GM12878 (cell line): ENCODE measurements at regions of chr12 and their contacts with region 1.

Region 1: GRCh38 chr12:49296034-49296835 is 1.3 kb downstream of the PRPH start:
- DNase-seq: no peak
- ATAC-seq: peak; percentile 89
- H3K4me3 ChIP-seq: peak overlapping the region; percentile 40; the same call in 1 of the 2 replicates
- H3K27ac ChIP-seq: no peak overlapping the region
- H3K4me1 ChIP-seq: peaks cover 8% of the 10 kb centered on the region
- H3K27me3 ChIP-seq: peaks cover 19 to 20% of the 10 kb centered on the region in 2 experiments
- CTCF ChIP-seq: peak; percentile 55 to 84 (median 77)
- EP300 ChIP-seq: no peak
- POLR2A ChIP-seq: no peak
- RAD21 ChIP-seq: no peak

Region 2: DNA sequence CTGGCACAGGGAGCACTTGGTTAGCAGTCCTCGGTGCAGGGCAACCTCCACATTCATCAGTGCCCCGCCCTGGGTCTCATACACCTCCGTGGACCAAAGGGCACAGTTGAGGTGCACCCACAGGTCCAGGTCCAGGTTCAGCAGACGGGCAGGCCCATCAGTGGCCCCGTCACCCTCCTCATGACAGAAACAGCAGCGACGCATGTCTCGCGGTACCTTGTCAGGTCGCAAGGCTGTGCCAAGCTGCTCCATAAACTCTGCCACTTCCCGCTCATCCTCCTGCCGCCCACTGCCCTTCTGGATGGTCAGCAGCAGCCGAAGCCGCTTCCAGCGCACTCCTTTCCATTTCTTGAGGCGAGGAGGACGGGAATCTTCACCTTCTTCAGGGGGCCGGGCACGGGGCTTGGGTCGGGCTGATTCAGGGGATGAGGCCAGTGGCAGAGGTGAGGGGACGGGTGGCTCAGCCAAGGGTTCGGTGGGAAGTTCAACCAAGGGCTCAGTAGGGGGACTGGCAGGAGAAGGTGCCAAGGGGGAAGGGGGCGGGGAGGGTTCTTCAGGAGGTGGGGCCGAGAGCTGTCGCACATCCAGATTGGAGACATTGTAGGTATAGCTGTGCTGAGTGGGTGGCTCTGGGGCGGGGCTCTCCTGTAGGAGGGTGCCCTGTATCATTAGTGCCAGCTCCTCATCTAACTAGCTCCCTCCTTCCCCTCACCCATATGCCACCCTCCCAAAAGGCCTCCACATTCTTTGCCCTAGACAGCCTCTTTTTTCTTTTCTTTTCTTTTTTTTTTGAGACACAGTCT is 269.4 kb before region 1 on chr12:
- CTCF ChIA-PET with region 1: no interaction called
- POLR2A ChIA-PET with region 1: no interaction called
- RAD21 ChIA-PET with region 1: no interaction called
- SMC1A ChIA-PET with region 1: no interaction called
- in situ Hi-C with region 1: no loop called
- intact Hi-C with region 1: no loop called
- DNase-seq: no peak
- ATAC-seq: no peak
- H3K4me3 ChIP-seq: no peak overlapping the region
- H3K27ac ChIP-seq: no peak overlapping the region
- H3K4me1 ChIP-seq: no peaks in the 10 kb centered on the region
- H3K27me3 ChIP-seq: no peaks in the 10 kb centered on the region
- CTCF ChIP-seq: no peak
- EP300 ChIP-seq: no peak
- POLR2A ChIP-seq: no peak
- RAD21 ChIP-seq: no peak

Region 3: DNA sequence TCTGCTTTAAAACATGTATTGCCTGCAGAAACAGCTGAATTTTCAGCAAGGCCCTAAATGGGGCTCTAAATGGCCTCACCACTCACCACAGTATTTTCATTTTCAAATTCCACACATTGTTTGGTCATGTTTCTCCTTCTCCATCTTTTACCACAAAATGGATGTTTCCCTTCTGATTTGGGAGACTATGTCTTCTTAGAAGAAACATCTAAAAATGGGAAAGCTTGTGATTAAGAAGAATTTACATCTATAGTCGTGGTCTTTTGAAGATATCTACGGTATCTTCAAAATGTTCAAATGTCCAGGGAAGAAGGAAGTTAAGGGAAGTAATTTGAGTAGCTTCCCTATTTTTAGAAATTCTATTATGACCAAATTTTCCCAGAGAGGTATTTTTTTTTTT is 52.1 kb before region 1 on chr12:
- CTCF ChIA-PET with region 1: no interaction called
- POLR2A ChIA-PET with region 1: no interaction called
- RAD21 ChIA-PET with region 1: no interaction called
- SMC1A ChIA-PET with region 1: no interaction called
- in situ Hi-C with region 1: no loop called
- intact Hi-C with region 1: no loop called
- DNase-seq: no peak
- ATAC-seq: no peak
- H3K4me3 ChIP-seq: no peak overlapping the region
- H3K27ac ChIP-seq: no peak overlapping the region
- H3K4me1 ChIP-seq: no peaks in the 10 kb centered on the region
- H3K27me3 ChIP-seq: no peaks in the 10 kb centered on the region
- CTCF ChIP-seq: no peak
- EP300 ChIP-seq: no peak
- POLR2A ChIP-seq: no peak
- RAD21 ChIP-seq: no peak

Region 4: DNA sequence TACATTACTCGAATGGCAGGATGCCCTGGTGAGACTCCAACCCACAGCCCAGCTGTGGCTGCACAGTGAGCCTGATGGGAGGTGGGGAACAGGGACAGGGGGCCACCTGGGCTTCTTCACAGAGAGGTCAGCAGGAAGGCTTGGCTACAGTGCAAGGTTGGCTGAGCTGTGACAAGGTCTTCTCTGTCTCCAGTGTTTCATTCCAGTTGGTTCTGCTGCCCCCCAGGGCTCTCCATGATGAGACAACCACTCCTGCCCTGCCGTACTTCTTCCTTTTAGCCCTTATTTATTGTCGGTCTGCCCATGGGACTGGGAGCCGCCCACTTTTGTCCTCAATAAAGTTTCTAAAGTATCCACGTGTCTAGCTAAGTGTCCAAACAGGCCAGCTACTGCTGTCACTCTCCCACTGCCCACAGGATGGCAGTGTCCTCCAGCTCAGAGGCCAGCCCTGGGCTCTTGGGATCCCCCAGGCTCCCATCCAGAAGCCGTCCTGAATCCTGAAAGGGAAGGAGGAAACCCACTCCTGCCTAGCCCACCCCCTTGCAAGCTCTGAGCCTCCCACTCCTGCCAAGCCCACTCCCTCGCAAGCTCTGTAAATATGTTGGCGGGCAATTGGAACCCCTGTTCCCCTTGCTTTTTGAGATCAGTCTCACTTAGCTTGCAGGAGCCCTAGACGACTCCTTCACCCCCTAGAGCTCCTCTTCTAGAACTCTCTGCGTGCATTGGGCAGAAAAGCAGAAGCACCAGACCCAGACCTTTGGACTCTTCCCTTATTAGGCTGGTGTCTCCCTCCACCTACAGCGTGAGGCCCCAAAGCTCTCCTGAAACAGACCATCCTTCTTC is 35.4 kb after region 1 on chr12:
- CTCF ChIA-PET with region 1: interaction called, 10 read pairs
- POLR2A ChIA-PET with region 1: interaction called, 3 read pairs
- RAD21 ChIA-PET with region 1: no interaction called
- SMC1A ChIA-PET with region 1: no interaction called
- in situ Hi-C with region 1: no loop called
- intact Hi-C with region 1: no loop called
- DNase-seq: no peak
- ATAC-seq: peak; percentile 85
- H3K4me3 ChIP-seq: no peak overlapping the region
- H3K27ac ChIP-seq: no peak overlapping the region
- H3K4me1 ChIP-seq: no peaks in the 10 kb centered on the region
- H3K27me3 ChIP-seq: peaks cover 3 to 12% of the 10 kb centered on the region in 2 experiments
- CTCF ChIP-seq: peak; percentile 55 to 68 (median 59)
- EP300 ChIP-seq: no peak
- POLR2A ChIP-seq: no peak
- RAD21 ChIP-seq: peak; percentile 58